Activated naive CD4-positive, alpha-beta T cell treated with anti-CD3 and anti-CD28 coated beads for 36 hours (primary cell): ENCODE measurements at regions of chr1 and their contacts with region 1.

Region 1: GRCh38 chr1:198681831-198682759 is 43.3 kb downstream of the PTPRC start:
- DNase-seq: peak; percentile 86
- H3K4me3 Mint-ChIP-seq: peak overlapping the region; percentile 61
- H3K27ac Mint-ChIP-seq: peak overlapping the region; percentile 99
- H3K4me1 Mint-ChIP-seq: peaks cover 86% of the 10 kb centered on the region
- H3K27me3 Mint-ChIP-seq: no peaks in the 10 kb centered on the region

Region 2: GRCh38 chr1:198088360-198089071 is 593.6 kb before region 1 on chr1:
- CTCF ChIA-PET with region 1: no interaction called
- intact Hi-C with region 1: loop called (anchors 10 kb)
- DNase-seq: peak; percentile 26
- H3K4me3 Mint-ChIP-seq: no peak overlapping the region
- H3K27ac Mint-ChIP-seq: no peak overlapping the region
- H3K4me1 Mint-ChIP-seq: peaks cover 7% of the 10 kb centered on the region
- H3K27me3 Mint-ChIP-seq: no peaks in the 10 kb centered on the region

Region 3: GRCh38 chr1:198143797-198144196 is 538.3 kb before region 1 on chr1:
- CTCF ChIA-PET with region 1: no interaction called
- intact Hi-C with region 1: no loop called
- DNase-seq: no peak
- H3K4me3 Mint-ChIP-seq: no peak overlapping the region
- H3K27ac Mint-ChIP-seq: no peak overlapping the region
- H3K4me1 Mint-ChIP-seq: peaks cover 4% of the 10 kb centered on the region
- H3K27me3 Mint-ChIP-seq: no peaks in the 10 kb centered on the region

Region 4: GRCh38 chr1:198359024-198359653 is 323.0 kb before region 1 on chr1:
- CTCF ChIA-PET with region 1: no interaction called
- intact Hi-C with region 1: loop called (anchors 10 kb)
- DNase-seq: no peak
- H3K4me3 Mint-ChIP-seq: no peak overlapping the region
- H3K27ac Mint-ChIP-seq: no peak overlapping the region
- H3K4me1 Mint-ChIP-seq: no peaks in the 10 kb centered on the region
- H3K27me3 Mint-ChIP-seq: no peaks in the 10 kb centered on the region

Region 5: DNA sequence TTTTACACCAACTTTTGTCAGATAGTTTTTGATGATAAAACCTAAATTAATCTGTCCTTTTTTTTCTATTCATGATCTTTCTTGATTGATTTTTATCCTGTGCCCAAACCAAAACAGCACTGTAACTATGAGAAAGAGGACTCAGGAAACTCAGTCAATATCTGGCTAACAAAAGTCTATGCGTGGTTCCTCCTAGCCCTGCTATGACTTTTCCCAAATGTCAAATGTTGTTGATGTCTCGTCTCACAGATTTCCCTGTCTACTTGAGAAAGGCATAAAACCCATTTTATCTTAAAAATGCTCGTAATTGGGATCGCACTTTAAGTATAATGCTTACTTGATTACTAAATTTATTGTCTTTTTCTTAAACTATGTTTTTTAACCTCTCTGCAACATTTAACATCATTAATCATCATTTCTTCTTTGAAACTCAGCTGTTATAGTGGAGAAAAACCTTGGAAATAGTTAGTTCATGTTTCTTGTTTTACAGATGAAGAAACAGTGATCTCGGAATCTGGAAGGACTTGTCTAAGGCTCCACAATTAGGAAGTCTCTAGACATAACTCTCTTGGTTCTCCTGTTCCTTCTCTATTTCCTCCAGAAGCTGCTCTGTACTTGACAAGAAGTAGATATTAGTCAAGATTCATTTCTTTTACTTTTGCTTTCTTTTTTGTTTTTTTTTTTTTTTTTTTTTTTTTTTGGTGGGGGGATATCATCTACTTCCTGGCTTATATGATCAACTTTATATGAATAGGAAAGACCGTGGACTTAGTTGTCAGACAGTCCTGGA is 69.4 kb before region 1 on chr1:
- CTCF ChIA-PET with region 1: interaction called, 7 read pairs
- intact Hi-C with region 1: loop called (anchors 2 kb)
- DNase-seq: no peak
- H3K4me3 Mint-ChIP-seq: peak overlapping the region; percentile 82
- H3K27ac Mint-ChIP-seq: peak overlapping the region; percentile 98
- H3K4me1 Mint-ChIP-seq: peaks cover 80% of the 10 kb centered on the region
- H3K27me3 Mint-ChIP-seq: no peaks in the 10 kb centered on the region

Region 6: GRCh38 chr1:198651650-198652400 is 30.3 kb before region 1 on chr1:
- CTCF ChIA-PET with region 1: interaction called, 10 read pairs
- intact Hi-C with region 1: loop called (anchors 1 kb)
- DNase-seq: no peak
- H3K4me3 Mint-ChIP-seq: peak overlapping the region; percentile 73
- H3K27ac Mint-ChIP-seq: peak overlapping the region; percentile 100
- H3K4me1 Mint-ChIP-seq: peaks cover 69% of the 10 kb centered on the region
- H3K27me3 Mint-ChIP-seq: no peaks in the 10 kb centered on the region

Region 7: DNA sequence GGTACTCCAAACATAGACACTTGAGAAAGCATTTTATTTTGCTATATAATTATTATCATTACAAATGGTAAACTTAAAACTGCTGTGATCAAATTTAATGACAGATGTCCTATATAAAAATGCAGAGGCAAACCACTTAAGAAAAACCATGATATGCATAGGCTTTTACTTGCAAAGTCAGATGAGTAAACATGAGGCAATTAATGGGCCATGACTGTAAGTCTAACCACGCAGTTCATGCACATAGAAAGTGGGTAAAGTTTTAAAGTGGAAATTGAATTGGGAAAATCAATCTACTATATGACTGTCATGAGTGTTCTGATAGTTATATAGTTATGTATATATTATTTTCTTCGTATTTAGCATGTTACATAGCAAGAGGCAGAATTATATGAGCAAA is 175.9 kb after region 1 on chr1:
- CTCF ChIA-PET with region 1: no interaction called
- intact Hi-C with region 1: no loop called
- DNase-seq: no peak
- H3K4me3 Mint-ChIP-seq: no peak overlapping the region
- H3K27ac Mint-ChIP-seq: no peak overlapping the region
- H3K4me1 Mint-ChIP-seq: no peaks in the 10 kb centered on the region
- H3K27me3 Mint-ChIP-seq: no peaks in the 10 kb centered on the region

Region 8: GRCh38 chr1:198922638-198923430 is 240.7 kb after region 1 on chr1:
- CTCF ChIA-PET with region 1: no interaction called
- intact Hi-C with region 1: loop called (anchors 5 kb)
- DNase-seq: no peak
- H3K4me3 Mint-ChIP-seq: no peak overlapping the region
- H3K27ac Mint-ChIP-seq: peak overlapping the region; percentile 79
- H3K4me1 Mint-ChIP-seq: peaks cover 71% of the 10 kb centered on the region
- H3K27me3 Mint-ChIP-seq: no peaks in the 10 kb centered on the region